ENCODE measurements at regions of chr16 and their contacts with region 1.

Region 1: DNA sequence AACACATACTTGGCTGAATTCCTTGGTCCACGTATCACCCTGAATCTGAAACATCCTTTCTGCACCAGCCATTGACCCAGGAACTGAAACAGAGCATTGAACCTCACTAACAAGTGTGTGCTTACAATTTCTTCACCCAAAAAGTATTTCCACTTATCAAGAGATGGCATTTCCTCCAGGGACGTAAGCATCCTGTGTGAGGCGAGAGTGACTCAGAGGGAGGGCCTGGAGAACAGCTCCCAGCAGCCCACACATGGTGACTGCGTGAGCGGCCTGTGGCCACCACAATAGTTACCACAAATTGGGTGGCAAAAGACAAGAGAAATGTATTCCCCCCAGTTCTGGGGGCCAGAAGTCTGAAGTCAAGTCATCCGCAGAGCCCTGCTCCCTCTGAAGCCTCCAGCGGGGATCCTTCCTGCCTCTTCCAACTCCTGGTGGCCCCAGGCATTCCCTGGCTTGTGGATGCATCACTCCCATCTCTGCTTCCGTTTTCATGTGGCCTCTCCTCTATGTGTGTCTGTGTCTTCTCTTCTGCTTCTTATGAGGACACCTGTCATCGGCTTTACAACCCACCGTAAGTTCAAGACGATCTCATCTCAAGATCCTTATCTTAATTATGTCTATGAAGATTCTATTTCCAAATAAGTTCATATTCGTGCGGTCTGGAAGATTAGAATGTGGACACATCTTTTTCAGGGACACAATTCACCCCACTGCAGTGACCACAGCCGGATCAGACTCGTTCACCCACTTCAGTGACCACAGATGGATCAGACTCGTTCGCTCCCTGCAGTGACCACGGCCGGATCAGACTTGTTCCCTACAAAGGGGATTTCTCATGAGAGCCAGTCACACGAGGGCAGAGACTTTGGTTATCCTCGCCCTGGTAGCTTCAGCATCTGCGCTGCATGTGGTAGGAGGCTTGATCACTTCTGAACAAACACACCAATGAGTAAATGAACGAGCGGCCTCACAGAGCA is 122.6 kb upstream of the FOXF1 start:
- DNase-seq: peak; percentile 100
- ATAC-seq: peak; percentile 68
- H3K4me3 ChIP-seq: no peak overlapping the region
- H3K27ac ChIP-seq: peak overlapping the region; percentile 85
- H3K4me1 ChIP-seq: peaks cover 37% of the 10 kb centered on the region
- H3K27me3 ChIP-seq: no peaks in the 10 kb centered on the region
- CTCF ChIP-seq: no peak
- POLR2A ChIP-seq: no peak
- RAD21 ChIP-seq: peak; percentile 38

Region 2: DNA sequence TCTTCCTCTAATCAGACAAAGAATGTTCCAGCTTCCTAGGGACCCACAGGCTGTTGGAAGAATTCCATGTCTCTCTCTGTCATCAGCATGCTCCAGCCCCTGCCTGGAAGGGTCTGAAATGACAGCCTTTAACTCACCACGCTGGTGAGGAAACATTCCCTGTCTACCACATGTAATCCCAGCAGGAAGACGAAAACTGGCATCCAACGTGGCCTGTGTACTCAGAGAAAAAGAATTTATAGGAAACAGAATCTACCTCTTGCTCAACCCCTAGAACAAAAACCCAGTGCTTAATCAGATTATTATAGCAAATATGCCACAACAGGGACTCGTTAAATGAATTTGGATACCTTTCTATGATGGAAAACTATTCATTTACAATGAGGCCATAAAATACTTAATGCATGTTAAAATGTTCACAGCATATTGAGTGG is 24.7 kb before region 1 on chr16:
- CTCF ChIA-PET with region 1: interaction called, 3 read pairs
- POLR2A ChIA-PET with region 1: no interaction called
- dilution Hi-C with region 1: no loop called
- in situ Hi-C with region 1: no loop called
- intact Hi-C with region 1: loop called (anchors 1 kb)
- DNase-seq: peak; percentile 98
- ATAC-seq: peak; percentile 81
- H3K4me3 ChIP-seq: no peak overlapping the region
- H3K27ac ChIP-seq: peak overlapping the region; percentile 81
- H3K4me1 ChIP-seq: peaks cover 30% of the 10 kb centered on the region
- H3K27me3 ChIP-seq: no peaks in the 10 kb centered on the region
- CTCF ChIP-seq: 0 out of 2 replicates have a peak, but pooled peaks have one; percentile 11
- POLR2A ChIP-seq: no peak
- RAD21 ChIP-seq: peak; percentile 39

Measured in IMR-90 (cell line).